CD14-positive monocyte (primary cell): ENCODE measurements at regions of chr19 and their contacts with region 1.

Region 1: DNA sequence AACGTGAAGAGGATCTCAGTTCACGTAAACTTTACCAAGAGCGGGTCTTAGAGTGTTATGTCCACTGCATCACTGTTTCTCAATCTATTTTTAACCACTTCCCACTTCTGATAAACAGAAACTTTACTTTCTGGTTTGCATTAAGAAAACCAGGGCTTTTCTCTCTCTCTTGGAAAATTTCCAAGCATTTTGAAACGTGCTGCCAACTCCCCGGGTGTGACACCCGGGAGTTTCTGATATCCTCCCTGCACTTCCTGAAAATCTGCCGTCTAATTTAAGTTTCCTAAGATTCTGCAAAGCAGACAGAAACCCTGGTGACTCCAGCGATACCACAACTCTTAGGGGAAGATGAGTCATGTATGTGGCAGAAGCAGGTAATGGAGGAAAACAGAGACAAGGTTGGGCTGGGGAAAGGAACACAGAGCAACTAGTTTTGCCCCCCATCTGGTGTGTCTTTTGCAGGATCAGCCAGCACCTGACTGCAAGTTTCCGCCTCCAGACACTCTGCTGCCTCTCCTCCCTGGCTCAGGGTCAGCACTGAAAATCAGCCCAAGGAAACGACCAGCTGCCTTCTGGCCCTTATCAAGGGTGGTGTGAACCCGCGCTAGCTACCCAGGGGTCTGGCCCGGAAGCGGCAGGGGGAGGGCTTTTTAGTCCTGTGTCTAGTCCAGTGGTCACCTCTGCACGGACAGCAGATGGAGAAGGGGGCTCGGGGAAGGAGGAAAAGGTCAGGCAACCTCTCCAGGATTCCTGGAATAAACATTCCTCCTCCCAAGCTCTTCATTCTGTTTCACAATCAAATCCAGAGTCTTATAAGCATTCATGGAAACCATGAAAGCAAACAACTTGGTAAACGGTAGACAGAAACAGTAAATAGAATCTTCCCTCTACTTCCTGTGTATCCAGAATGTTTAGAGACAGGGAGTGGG is 11.3 kb upstream of the FFAR2 start:
- DNase-seq: peak; percentile 92 to 99 (median 99)
- H3K4me3 ChIP-seq: peak overlapping the region in 1 of 3 experiments; percentile 46
- H3K4me3 Mint-ChIP-seq: peak overlapping the region; percentile 64 to 80
- H3K27ac ChIP-seq: peak overlapping the region; percentile 71 to 83
- H3K27ac Mint-ChIP-seq: peak overlapping the region; percentile 95 to 99 (median 96)
- H3K4me1 ChIP-seq: peaks cover 82 to 86% of the 10 kb centered on the region in 2 donors
- H3K4me1 Mint-ChIP-seq: peaks cover 96% of the 10 kb centered on the region
- H3K27me3 ChIP-seq: no peaks in the 10 kb centered on the region
- H3K27me3 Mint-ChIP-seq: peaks cover 5 to 17% (median 7%) of the 10 kb centered on the region in 3 donors
- CTCF ChIP-seq: no peak

Region 2: DNA sequence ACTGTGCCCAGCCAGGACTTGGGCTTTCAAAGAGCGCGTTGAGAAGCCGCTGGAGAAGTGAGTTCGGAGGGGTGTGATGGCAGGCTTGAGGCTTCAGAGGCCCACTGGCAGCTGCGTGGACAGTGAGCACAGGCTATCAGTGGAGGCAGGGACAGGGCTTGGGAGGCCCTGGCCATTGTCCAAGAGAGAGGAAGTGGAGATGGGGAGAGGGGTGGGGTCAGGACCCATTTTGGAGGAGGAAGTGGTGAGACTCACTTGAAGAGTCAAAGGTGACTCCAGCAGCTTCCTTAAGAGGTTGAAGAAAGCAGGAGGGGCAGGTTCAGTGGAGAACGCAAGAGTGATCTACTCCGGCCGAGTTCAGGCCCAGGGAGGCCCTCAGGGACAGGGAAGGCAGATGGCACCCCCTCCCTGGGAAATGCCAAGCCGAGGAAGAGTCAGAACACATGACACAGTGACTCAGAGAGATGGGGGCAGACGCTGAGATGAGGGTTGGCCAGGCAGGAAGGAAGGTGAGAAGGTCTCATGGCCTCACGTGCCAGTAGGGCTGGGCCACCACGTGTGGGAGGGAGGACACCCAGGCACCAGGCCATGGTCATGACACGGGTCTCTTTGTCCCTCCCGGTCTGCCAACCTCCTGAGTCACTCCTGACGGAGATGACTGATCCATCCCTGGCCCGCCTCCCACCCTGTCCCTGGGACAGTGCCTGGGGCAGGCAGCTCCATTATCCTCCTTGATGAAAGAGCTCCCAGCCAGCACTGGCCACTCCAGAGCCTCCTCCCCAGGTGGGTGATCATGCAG is 117.9 kb before region 1 on chr19:
- intact Hi-C with region 1: loop called in 1 of 2 experiments (anchors 2 kb)
- DNase-seq: peak; percentile 97 to 99 (median 97)
- H3K4me3 ChIP-seq: no peak overlapping the region
- H3K4me3 Mint-ChIP-seq: peak overlapping the region; percentile 20 to 67
- H3K27ac ChIP-seq: peak overlapping the region; percentile 83 to 90
- H3K27ac Mint-ChIP-seq: peak overlapping the region; percentile 87 to 99 (median 98)
- H3K4me1 ChIP-seq: peaks cover 65 to 74% of the 10 kb centered on the region in 2 donors
- H3K4me1 Mint-ChIP-seq: peaks cover 65% of the 10 kb centered on the region
- H3K27me3 ChIP-seq: no peaks in the 10 kb centered on the region
- H3K27me3 Mint-ChIP-seq: peaks cover 0 to 5% (median 2%) of the 10 kb centered on the region in 3 donors
- CTCF ChIP-seq: no peak

Region 3: DNA sequence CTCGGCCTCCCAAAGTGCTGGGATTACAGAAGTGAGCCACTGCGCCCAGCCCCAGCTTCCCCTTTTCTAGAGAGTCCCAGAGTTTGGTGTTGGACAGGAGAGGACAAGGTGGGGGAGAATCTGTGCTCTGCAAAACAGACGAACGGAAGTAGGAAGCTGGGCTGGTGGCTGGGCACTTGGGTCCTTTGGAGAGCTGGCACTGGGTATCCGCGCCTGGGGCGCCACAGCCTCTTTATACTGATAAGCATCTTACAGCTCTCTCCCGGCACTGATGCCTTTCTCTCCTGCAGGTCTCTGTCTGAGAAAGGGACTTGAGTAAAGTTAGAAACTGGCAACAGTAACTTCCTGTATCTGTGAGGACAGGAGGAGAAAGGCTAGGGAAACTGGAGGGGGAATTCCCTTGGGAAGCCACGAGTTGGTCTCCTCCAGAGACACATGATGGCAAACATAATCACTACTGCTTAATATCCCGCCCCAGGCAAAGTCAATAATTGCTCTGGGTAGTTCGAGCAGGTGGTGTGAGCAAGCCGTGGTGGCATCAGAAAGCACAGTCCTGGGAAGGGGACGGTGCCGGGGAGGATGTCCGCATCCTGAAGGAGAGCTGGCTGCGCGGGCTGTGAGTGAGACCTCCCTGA is 12.4 kb after region 1 on chr19:
- intact Hi-C with region 1: loop called in 1 of 2 experiments (anchors 2 kb)
- DNase-seq: peak; percentile 77 to 87 (median 80)
- H3K4me3 ChIP-seq: peak overlapping the region; percentile 4 to 73 (median 32)
- H3K4me3 Mint-ChIP-seq: peak overlapping the region; percentile 72 to 79
- H3K27ac ChIP-seq: peak overlapping the region; percentile 95 to 99
- H3K27ac Mint-ChIP-seq: peak overlapping the region; percentile 98 to 100 (median 100)
- H3K4me1 ChIP-seq: peaks cover 74 to 81% of the 10 kb centered on the region in 2 donors
- H3K4me1 Mint-ChIP-seq: peaks cover 77% of the 10 kb centered on the region
- H3K27me3 ChIP-seq: no peaks in the 10 kb centered on the region
- H3K27me3 Mint-ChIP-seq: peaks cover 0 to 16% (median 7%) of the 10 kb centered on the region in 3 donors
- CTCF ChIP-seq: no peak

Region 4: GRCh38 chr19:35533822-35534521 is 97.2 kb after region 1 on chr19:
- intact Hi-C with region 1: no loop called
- DNase-seq: peak in 2 of 3 donors; percentile 18 to 43
- H3K4me3 ChIP-seq: no peak overlapping the region
- H3K4me3 Mint-ChIP-seq: peak overlapping the region in 1 of 2 donors; percentile 73
- H3K27ac ChIP-seq: no peak overlapping the region
- H3K27ac Mint-ChIP-seq: peak overlapping the region in 1 of 7 donors; percentile 55
- H3K4me1 ChIP-seq: peaks cover 7 to 11% of the 10 kb centered on the region in 2 donors
- H3K4me1 Mint-ChIP-seq: peaks cover 7% of the 10 kb centered on the region
- H3K27me3 ChIP-seq: peaks cover 0 to 20% of the 10 kb centered on the region in 2 donors
- H3K27me3 Mint-ChIP-seq: peaks cover 21 to 38% (median 29%) of the 10 kb centered on the region in 3 donors
- CTCF ChIP-seq: no peak